Tibial artery (tissue), 4 donors: ENCODE measurements at regions of chr11 and their contacts with region 1.

Region 1: DNA sequence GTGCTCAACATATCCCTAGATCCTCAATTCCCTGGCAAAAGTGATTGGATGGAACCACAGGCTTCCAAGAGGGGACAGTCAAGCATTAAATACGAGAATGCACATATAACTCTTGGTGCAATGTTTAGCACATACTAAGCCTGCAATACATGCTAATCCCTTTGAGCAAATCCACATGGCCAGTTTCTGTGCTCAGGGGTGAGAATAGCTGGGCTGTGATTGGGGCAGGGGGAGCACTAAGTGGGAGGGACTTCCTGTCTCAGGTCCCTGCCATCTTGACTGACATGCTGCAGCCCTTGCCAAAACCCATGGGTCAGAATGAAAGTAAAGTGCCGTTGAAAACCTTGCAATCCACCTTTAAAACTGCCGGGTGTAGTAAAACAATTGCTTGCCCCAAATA is 2.7 kb upstream of the ADAMTS15 start:
- DNase-seq: no peak
- H3K4me3 ChIP-seq: no peak overlapping the region
- H3K27ac ChIP-seq: no peak overlapping the region
- H3K4me1 ChIP-seq: peaks cover 0 to 17% (median 5%) of the 10 kb centered on the region in 4 donors
- H3K27me3 ChIP-seq: no peaks in the 10 kb centered on the region
- CTCF ChIP-seq: no peak

Region 2: GRCh38 chr11:130827451-130828377 is 381.9 kb after region 1 on chr11:
- intact Hi-C with region 1: loop called (anchors 2 kb)
- DNase-seq: peak; percentile 66 to 90
- H3K4me3 ChIP-seq: no peak overlapping the region
- H3K27ac ChIP-seq: peak overlapping the region; percentile 63 to 77
- H3K4me1 ChIP-seq: peaks cover 0 to 55% (median 43%) of the 10 kb centered on the region in 4 donors
- H3K27me3 ChIP-seq: no peaks in the 10 kb centered on the region
- CTCF ChIP-seq: peak; percentile 56 to 59